Breast epithelium (tissue), 4 donors: ENCODE measurements at regions of chr1 and their contacts with region 1.

Region 1: GRCh38 chr1:162046921-162047320 is 22.6 kb upstream of the NOS1AP start:
- DNase-seq: no peak
- H3K4me3 ChIP-seq: no peak overlapping the region
- H3K27ac ChIP-seq: no peak overlapping the region
- H3K4me1 ChIP-seq: no peaks in the 10 kb centered on the region
- H3K27me3 ChIP-seq: no peaks in the 10 kb centered on the region
- CTCF ChIP-seq: no peak
- POLR2A ChIP-seq: no peak

Region 2: DNA sequence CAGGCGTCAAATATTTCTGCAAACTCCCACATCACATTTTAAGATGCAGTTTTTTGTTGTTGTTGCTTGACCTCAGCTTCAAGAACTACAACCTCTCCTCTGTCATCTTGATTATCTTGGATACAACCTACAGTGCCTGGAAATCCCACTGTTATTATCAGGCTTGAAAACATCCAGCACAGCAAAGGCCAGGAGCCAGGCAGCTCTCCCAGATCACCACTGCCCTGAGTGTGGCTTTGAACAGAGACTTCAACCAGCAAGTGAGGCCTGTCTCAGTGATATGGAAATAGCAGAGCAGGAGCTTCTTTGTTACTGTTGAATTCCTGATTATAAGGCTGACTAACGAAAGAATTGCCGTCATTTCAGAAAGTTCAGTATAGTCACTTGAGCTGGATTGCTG is 785.5 kb after region 1 on chr1:
- intact Hi-C with region 1: loop called (anchors 5 kb)
- DNase-seq: no peak
- H3K4me3 ChIP-seq: no peak overlapping the region
- H3K27ac ChIP-seq: no peak overlapping the region
- H3K4me1 ChIP-seq: no peaks in the 10 kb centered on the region
- H3K27me3 ChIP-seq: peaks cover 0 to 2% of the 10 kb centered on the region in 2 donors
- CTCF ChIP-seq: no peak
- POLR2A ChIP-seq: no peak